Dendritic cell treated with granulocyte-macrophage colony-stimulating factor and Interleukin-4, amounts not matched to agents 40 ng/mL and 50 ng/mL, for 4 days (primary cell): ENCODE measurements at regions of chr16 and their contacts with region 1.

Region 1: DNA sequence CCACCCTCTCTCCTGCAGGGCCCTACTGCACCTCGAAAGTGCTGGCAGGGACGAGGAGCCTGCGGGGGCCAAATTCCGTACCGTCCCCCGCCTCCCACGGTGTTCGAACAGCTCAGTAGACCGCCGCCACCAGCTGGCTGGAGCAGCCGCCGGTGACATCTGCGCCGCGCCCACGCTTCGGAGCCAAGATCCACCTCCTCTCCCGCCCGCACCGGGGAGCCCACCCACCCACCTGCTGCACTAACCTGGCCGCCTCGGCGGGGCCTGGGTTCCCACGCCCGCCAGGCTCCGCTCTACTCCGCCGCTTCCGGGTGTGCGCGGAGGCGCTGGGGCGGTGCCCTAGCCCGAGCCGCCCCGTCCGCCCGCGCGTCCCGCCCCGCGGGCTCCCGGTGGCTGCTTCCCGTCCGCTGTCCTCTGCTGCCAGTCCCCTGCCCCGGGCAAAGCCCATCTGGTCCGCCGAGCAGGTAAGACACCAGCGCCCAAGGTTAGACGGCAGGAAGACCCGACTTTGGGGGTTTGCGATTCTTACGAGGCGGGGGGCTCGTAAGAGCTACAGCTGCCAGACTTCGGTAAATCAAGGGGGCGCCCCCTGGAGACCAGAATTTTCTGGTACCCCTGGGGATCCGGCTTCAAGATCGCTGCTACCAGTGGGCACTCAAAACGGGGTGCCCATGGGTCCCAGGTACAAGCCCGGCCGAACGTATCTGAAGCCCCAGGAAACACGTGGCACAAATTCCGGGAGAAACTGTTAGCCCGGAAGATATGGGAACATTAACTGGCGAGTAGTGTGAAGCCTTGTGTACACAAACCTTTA is at the starts of genes FBXL8 and TRADD:
- H3K4me3 Mint-ChIP-seq: peak within 1 kb of the TSS; percentile 88
- H3K27ac Mint-ChIP-seq: peak within 1 kb of the TSS; percentile 90
- H3K4me1 Mint-ChIP-seq: peaks cover 81% of the 10 kb centered on the region
- H3K27me3 Mint-ChIP-seq: peaks cover 53% of the 10 kb centered on the region

Region 2: GRCh38 chr16:66954097-66954659 is 205.6 kb before region 1 on chr16:
- intact Hi-C with region 1: loop called (anchors 2 kb)
- H3K4me3 Mint-ChIP-seq: no peak overlapping the region
- H3K27ac Mint-ChIP-seq: no peak overlapping the region
- H3K4me1 Mint-ChIP-seq: peaks cover 17% of the 10 kb centered on the region
- H3K27me3 Mint-ChIP-seq: peaks cover 42% of the 10 kb centered on the region

Region 3: GRCh38 chr16:66977341-66978113 is 182.3 kb before region 1 on chr16:
- intact Hi-C with region 1: loop called (anchors 1 kb)
- H3K4me3 Mint-ChIP-seq: no peak overlapping the region
- H3K27ac Mint-ChIP-seq: no peak overlapping the region
- H3K4me1 Mint-ChIP-seq: peaks cover 34% of the 10 kb centered on the region
- H3K27me3 Mint-ChIP-seq: peaks cover 32% of the 10 kb centered on the region

Region 4: GRCh38 chr16:67017810-67018488 is 141.9 kb before region 1 on chr16:
- intact Hi-C with region 1: loop called (anchors 5 kb)
- H3K4me3 Mint-ChIP-seq: no peak overlapping the region
- H3K27ac Mint-ChIP-seq: no peak overlapping the region
- H3K4me1 Mint-ChIP-seq: peaks cover 29% of the 10 kb centered on the region
- H3K27me3 Mint-ChIP-seq: peaks cover 38% of the 10 kb centered on the region

Region 5: GRCh38 chr16:67040906-67041305 is 118.9 kb before region 1 on chr16:
- intact Hi-C with region 1: no loop called
- H3K4me3 Mint-ChIP-seq: no peak overlapping the region
- H3K27ac Mint-ChIP-seq: no peak overlapping the region
- H3K4me1 Mint-ChIP-seq: peaks cover 20% of the 10 kb centered on the region
- H3K27me3 Mint-ChIP-seq: no peaks in the 10 kb centered on the region

Region 6: GRCh38 chr16:67109407-67110135 is 50.2 kb before region 1 on chr16 and contains the start of gene PHAF1:
- intact Hi-C with region 1: loop called (anchors 10 kb)
- H3K4me3 Mint-ChIP-seq: peak within 1 kb of the TSS; percentile 99
- H3K27ac Mint-ChIP-seq: peak within 1 kb of the TSS; percentile 92
- H3K4me1 Mint-ChIP-seq: peaks cover 69% of the 10 kb centered on the region
- H3K27me3 Mint-ChIP-seq: no peaks in the 10 kb centered on the region

Region 7: DNA sequence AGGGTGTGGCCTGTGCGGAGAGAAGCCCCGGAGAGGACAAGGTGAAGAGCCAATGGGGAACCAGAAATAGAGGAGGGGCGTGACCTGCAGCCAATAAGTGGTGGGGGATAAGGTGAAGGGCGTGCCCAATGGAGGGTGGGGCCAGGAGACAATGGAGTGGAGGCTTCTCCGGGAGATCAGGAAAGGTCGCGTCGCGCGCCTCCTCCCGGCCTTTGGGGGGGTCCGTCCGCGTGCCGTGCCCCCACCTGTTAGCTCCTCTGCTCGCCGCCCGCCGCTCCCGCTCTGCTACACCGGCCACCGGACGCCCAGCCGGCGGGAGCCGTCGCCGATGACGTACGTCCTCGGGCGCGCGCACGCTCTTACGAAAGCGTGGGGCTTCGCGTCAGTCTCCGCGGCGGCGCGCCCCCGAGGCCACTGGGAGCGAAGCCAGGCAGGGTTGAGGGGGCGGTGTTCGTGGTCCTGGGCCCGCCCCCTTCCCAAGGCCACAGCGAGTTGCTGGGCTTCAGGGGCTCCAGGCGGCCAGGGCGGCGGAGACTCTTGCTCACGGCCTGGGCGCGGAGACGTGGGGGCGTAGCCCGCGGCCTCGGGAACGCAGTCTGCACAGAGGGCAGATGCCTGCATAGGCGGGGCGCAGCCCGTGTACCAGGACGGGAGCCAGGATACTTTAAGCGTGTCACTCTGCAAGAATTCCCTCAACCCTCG is 24.0 kb after region 1 on chr16 and contains the start of gene MATCAP1:
- intact Hi-C with region 1: loop called (anchors 2 kb)
- H3K4me3 Mint-ChIP-seq: no peak within 1 kb of the TSS
- H3K27ac Mint-ChIP-seq: no peak within 1 kb of the TSS
- H3K4me1 Mint-ChIP-seq: peaks cover 18% of the 10 kb centered on the region
- H3K27me3 Mint-ChIP-seq: peaks cover 32% of the 10 kb centered on the region

Region 8: GRCh38 chr16:67399181-67399733 is 239.5 kb after region 1 on chr16:
- intact Hi-C with region 1: no loop called
- H3K4me3 Mint-ChIP-seq: no peak overlapping the region
- H3K27ac Mint-ChIP-seq: no peak overlapping the region
- H3K4me1 Mint-ChIP-seq: peaks cover 29% of the 10 kb centered on the region
- H3K27me3 Mint-ChIP-seq: peaks cover 55% of the 10 kb centered on the region